ENCODE measurements at regions of chr3 and their contacts with region 1.

Region 1: DNA sequence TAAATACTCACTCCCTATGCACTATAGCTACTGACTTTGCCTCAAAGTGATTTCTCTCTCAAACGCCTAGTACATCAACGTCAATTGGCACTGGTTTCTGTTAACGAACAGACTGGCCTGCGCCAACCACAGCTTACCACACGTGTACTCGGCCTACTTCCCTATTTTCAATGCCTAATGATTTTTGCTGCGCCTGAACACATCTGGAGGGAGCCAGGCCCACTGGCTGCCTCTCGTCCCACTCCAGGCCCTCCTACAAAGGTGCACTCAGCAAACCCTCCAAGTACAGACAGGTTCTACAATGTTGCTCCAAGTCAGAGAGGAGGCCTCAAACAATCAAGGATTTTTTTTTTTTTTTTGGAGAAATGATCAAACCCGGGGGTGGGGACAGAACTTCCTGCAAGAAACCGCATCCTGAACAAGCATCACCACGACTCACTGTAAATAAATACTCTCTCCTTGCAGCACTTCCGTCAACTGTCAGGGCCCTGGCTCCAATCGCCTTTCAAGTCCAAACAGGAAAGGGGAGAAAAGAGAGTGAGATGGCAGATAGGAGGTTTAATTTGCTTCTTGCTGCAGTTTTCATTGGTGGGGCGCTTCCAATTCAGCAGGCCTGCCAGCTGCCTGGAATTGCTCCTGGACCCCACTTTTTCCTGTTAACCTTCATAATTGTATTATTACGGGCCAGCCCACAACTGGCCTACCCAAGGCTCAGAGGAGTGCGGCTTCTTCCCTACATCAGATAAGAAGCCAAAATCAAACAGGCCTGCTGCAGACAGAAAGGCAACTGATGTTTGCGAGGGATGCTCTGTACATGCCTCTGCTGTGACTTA is 139.3 kb downstream of the FOXP1 start:
- DNase-seq: peak; percentile 49 to 95 (median 74)
- ATAC-seq: peak; percentile 77
- H3K4me3 ChIP-seq: peak overlapping the region in 1 of 2 experiments; percentile 6
- H3K4me3 Mint-ChIP-seq: peak overlapping the region; percentile 68
- H3K27ac ChIP-seq: peak overlapping the region; percentile 78 to 83
- H3K27ac Mint-ChIP-seq: peak overlapping the region; percentile 98
- H3K4me1 ChIP-seq: peaks cover 98% of the 10 kb centered on the region
- H3K4me1 Mint-ChIP-seq: peaks cover 97% of the 10 kb centered on the region
- H3K27me3 ChIP-seq: no peaks in the 10 kb centered on the region
- H3K27me3 Mint-ChIP-seq: no peaks in the 10 kb centered on the region
- CTCF ChIP-seq: no peak

Region 2: DNA sequence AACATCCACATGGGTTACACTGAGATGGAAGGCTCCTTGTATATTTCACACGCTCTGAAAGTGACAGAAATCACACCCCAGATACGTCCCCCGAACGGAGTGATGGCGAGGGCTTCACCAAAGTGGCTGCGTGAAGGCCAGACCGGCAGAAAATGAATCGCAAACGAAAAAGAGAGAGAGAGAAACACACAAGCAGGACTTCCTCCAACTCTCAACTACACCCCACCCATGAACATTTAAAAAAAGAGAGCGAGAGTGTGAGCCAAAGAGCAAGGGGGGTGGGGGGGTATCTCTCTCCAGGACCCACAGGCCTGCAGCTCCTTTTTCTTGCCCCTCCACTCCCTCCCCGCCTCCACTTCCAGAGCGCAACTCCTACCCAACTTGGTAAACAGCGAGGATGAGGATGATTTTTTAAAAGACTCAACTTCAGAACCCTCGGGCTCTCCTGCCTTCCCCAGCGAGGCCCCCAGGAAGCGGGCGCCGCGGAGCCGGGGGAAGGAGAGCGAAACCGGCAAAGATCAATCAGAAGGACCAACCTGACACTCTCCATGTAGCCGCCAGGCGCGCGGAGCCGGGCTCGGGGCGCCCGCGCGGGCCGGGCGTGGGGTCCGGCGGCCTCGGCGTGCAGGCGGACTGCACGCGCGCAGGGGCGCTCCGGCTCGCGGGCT is 379.8 kb before region 1 on chr3:
- CTCF ChIA-PET with region 1: no interaction called
- POLR2A ChIA-PET with region 1: no interaction called
- intact Hi-C with region 1: loop called in 1 of 2 experiments (anchors 10 kb)
- DNase-seq: peak; percentile 48 to 86 (median 66)
- ATAC-seq: peak; percentile 43
- H3K4me3 ChIP-seq: peak overlapping the region; percentile 65 to 91
- H3K4me3 Mint-ChIP-seq: no peak overlapping the region
- H3K27ac ChIP-seq: peak overlapping the region; percentile 80 to 85
- H3K27ac Mint-ChIP-seq: no peak overlapping the region
- H3K4me1 ChIP-seq: peaks cover 79% of the 10 kb centered on the region
- H3K4me1 Mint-ChIP-seq: peaks cover 67% of the 10 kb centered on the region
- H3K27me3 ChIP-seq: no peaks in the 10 kb centered on the region
- H3K27me3 Mint-ChIP-seq: no peaks in the 10 kb centered on the region
- CTCF ChIP-seq: no peak

Region 3: DNA sequence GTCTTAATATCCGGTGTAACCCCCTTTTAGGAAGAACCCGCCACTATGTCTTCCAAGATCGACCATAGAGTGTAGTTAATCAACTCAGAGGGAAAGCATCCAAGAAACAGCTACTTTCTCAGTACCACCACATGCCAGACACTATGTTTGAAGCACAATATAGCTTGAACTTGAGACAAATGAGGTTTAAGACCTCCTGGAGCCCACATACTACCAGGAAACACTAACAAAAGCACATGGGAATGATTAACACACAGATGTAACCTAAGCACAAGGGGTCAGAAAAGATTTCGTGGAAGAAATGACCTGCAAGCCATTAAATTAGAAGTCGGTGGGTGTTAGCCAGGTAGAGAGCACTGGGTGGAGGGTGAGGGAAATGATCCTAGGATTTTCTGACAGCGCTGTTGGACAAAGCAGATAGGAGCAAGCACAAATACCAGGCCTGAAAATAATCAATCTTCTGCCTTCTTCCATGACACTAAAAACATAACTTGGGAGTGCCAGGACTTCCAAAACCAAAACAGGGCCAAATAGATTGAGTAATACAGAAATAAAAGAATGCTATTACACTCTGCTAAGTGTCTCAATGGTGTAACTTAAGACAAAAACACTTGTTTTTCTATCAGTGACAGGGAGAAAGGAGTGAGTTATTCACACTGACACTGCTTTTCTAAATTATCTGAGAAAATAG is 74.4 kb before region 1 on chr3:
- CTCF ChIA-PET with region 1: no interaction called
- POLR2A ChIA-PET with region 1: interaction called, 4 read pairs
- intact Hi-C with region 1: loop called in 1 of 2 experiments (anchors 1 kb)
- DNase-seq: no peak
- ATAC-seq: no peak
- H3K4me3 ChIP-seq: no peak overlapping the region
- H3K4me3 Mint-ChIP-seq: no peak overlapping the region
- H3K27ac ChIP-seq: no peak overlapping the region
- H3K27ac Mint-ChIP-seq: peak overlapping the region; percentile 76
- H3K4me1 ChIP-seq: peaks cover 72% of the 10 kb centered on the region
- H3K4me1 Mint-ChIP-seq: peaks cover 84% of the 10 kb centered on the region
- H3K27me3 ChIP-seq: no peaks in the 10 kb centered on the region
- H3K27me3 Mint-ChIP-seq: no peaks in the 10 kb centered on the region
- CTCF ChIP-seq: no peak

Region 4: GRCh38 chr3:71416876-71417275 is 27.4 kb before region 1 on chr3:
- CTCF ChIA-PET with region 1: interaction called, 6 read pairs
- POLR2A ChIA-PET with region 1: interaction called, 10 read pairs
- intact Hi-C with region 1: loop called (anchors 1 to 2 kb)
- DNase-seq: peak in 6 of 9 experiments; percentile 41 to 82 (median 60)
- ATAC-seq: peak; percentile 67
- H3K4me3 ChIP-seq: peak overlapping the region in 1 of 2 experiments; percentile 11
- H3K4me3 Mint-ChIP-seq: peak overlapping the region; percentile 54
- H3K27ac ChIP-seq: peak overlapping the region; percentile 60 to 63
- H3K27ac Mint-ChIP-seq: peak overlapping the region; percentile 93
- H3K4me1 ChIP-seq: peaks cover 81% of the 10 kb centered on the region
- H3K4me1 Mint-ChIP-seq: peaks cover 92% of the 10 kb centered on the region
- H3K27me3 ChIP-seq: no peaks in the 10 kb centered on the region
- H3K27me3 Mint-ChIP-seq: no peaks in the 10 kb centered on the region
- CTCF ChIP-seq: peak; percentile 31

Region 5: GRCh38 chr3:71430941-71431552 is 13.2 kb before region 1 on chr3:
- CTCF ChIA-PET with region 1: interaction called, 7 read pairs
- POLR2A ChIA-PET with region 1: interaction called, 10 read pairs
- intact Hi-C with region 1: loop called in 1 of 2 experiments (anchors 1 kb)
- DNase-seq: peak in 2 of 9 experiments; percentile 43 to 46
- ATAC-seq: peak; percentile 57
- H3K4me3 ChIP-seq: no peak overlapping the region
- H3K4me3 Mint-ChIP-seq: peak overlapping the region; percentile 26
- H3K27ac ChIP-seq: peak overlapping the region; percentile 6 to 49
- H3K27ac Mint-ChIP-seq: peak overlapping the region; percentile 95
- H3K4me1 ChIP-seq: peaks cover 85% of the 10 kb centered on the region
- H3K4me1 Mint-ChIP-seq: peaks cover 87% of the 10 kb centered on the region
- H3K27me3 ChIP-seq: no peaks in the 10 kb centered on the region
- H3K27me3 Mint-ChIP-seq: no peaks in the 10 kb centered on the region
- CTCF ChIP-seq: no peak

Region 6: GRCh38 chr3:71487418-71487817 is 43.2 kb after region 1 on chr3:
- CTCF ChIA-PET with region 1: interaction called, 10 read pairs
- POLR2A ChIA-PET with region 1: interaction called, 79 read pairs
- intact Hi-C with region 1: loop called in 1 of 2 experiments (anchors 2 kb)
- DNase-seq: peak in 1 of 9 experiments; percentile 56
- ATAC-seq: no peak
- H3K4me3 ChIP-seq: peak overlapping the region in 1 of 2 experiments; percentile 33
- H3K4me3 Mint-ChIP-seq: peak overlapping the region; percentile 76
- H3K27ac ChIP-seq: peak overlapping the region; percentile 71 to 92
- H3K27ac Mint-ChIP-seq: peak overlapping the region; percentile 95
- H3K4me1 ChIP-seq: peaks cover 97% of the 10 kb centered on the region
- H3K4me1 Mint-ChIP-seq: peaks cover 84% of the 10 kb centered on the region
- H3K27me3 ChIP-seq: no peaks in the 10 kb centered on the region
- H3K27me3 Mint-ChIP-seq: no peaks in the 10 kb centered on the region
- CTCF ChIP-seq: no peak

Region 7: DNA sequence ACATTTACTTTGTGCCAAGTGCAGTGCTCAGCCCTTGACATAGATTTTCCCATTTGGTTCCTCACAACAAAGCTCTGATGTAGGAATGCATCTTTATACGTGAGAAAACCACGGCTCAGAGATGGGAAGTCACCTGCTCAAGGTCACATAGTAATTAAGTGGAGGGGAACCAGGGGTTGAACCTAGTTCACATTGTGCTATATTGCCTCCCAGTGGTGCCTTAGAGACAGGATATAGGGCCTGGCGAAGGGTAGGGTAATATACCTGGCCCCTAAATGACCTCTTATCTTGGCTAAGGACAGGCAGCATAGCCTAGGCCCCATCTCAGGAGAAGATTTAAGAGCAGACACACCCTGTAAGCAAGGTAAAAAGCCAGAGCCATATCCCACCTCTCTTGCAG is 67.8 kb after region 1 on chr3:
- CTCF ChIA-PET with region 1: interaction called, 9 read pairs
- POLR2A ChIA-PET with region 1: no interaction called
- intact Hi-C with region 1: loop called in 1 of 2 experiments (anchors 5 kb)
- DNase-seq: peak in 7 of 9 experiments; percentile 23 to 86 (median 54)
- ATAC-seq: peak; percentile 98
- H3K4me3 ChIP-seq: no peak overlapping the region
- H3K4me3 Mint-ChIP-seq: no peak overlapping the region
- H3K27ac ChIP-seq: no peak overlapping the region
- H3K27ac Mint-ChIP-seq: peak overlapping the region; percentile 76
- H3K4me1 ChIP-seq: peaks cover 30% of the 10 kb centered on the region
- H3K4me1 Mint-ChIP-seq: peaks cover 23% of the 10 kb centered on the region
- H3K27me3 ChIP-seq: no peaks in the 10 kb centered on the region
- H3K27me3 Mint-ChIP-seq: no peaks in the 10 kb centered on the region
- CTCF ChIP-seq: peak; percentile 67